Left lung (tissue), 14 donors: ENCODE measurements at regions of chr15 and their contacts with region 1.

Region 1: DNA sequence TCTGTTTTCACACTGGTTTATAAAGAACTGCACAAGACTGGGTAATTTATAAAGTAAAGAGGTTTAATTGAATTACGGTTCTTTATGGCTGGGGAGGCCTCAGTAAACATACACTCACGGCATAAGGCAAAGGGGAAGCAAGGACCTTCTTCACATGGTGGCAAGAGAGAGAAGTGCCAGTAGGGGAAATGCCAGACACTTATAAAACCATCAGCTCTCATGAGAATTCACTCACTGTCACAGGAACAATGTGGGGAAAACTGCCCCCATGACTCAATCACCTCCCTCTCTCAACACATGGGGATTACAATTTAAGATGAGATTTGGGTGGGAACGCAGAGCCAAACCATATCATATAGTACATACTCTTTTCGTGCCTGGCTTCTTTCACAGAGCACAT is 42.4 kb downstream of the MAP2K1 start:
- DNase-seq: no peak
- ATAC-seq: peak; percentile 53
- H3K4me3 ChIP-seq: no peak overlapping the region
- H3K27ac ChIP-seq: no peak overlapping the region
- H3K4me1 ChIP-seq: peaks cover 0 to 36% of the 10 kb centered on the region in 2 donors
- H3K27me3 ChIP-seq: no peaks in the 10 kb centered on the region
- CTCF ChIP-seq: no peak

Region 2: GRCh38 chr15:66472176-66472999 is 43.3 kb after region 1 on chr15:
- intact Hi-C with region 1: loop called in 1 of 2 experiments (anchors 10 kb)
- DNase-seq: peak in 2 of 4 donors; percentile 42 to 59
- ATAC-seq: no peak
- H3K4me3 ChIP-seq: no peak overlapping the region
- H3K27ac ChIP-seq: no peak overlapping the region
- H3K4me1 ChIP-seq: no peaks in the 10 kb centered on the region
- H3K27me3 ChIP-seq: no peaks in the 10 kb centered on the region
- CTCF ChIP-seq: no peak

Region 3: GRCh38 chr15:66488525-66488924 is 59.4 kb after region 1 on chr15:
- intact Hi-C with region 1: no loop called
- DNase-seq: no peak
- ATAC-seq: no peak
- H3K4me3 ChIP-seq: no peak overlapping the region
- H3K27ac ChIP-seq: no peak overlapping the region
- H3K4me1 ChIP-seq: peaks cover 0 to 21% of the 10 kb centered on the region in 2 donors
- H3K27me3 ChIP-seq: no peaks in the 10 kb centered on the region
- CTCF ChIP-seq: no peak